Activated T-helper 1 cell treated with anti-CD3 and anti-CD28 coated beads, Interleukin-12 subunit alpha, Interleukin-12 subunit beta, Interleukin-2, Interleukin-4 antibody, amounts not matched to agents 30 ng/mL and 10 ng/mL and 1 ng/mL, durations not matched to agents 14 hours and 24 hours and 36 hours (primary cell): ENCODE measurements at regions of chr1 and their contacts with region 1.

Region 1: GRCh38 chr1:221708987-221709386 is 32.9 kb downstream of the DUSP10 start:
- DNase-seq: peak; percentile 50
- H3K4me3 Mint-ChIP-seq: no peak overlapping the region
- H3K27ac Mint-ChIP-seq: peak overlapping the region; percentile 92
- H3K4me1 Mint-ChIP-seq: peaks cover 78% of the 10 kb centered on the region
- H3K27me3 Mint-ChIP-seq: no peaks in the 10 kb centered on the region

Region 2: GRCh38 chr1:220879076-220879508 is 829.9 kb before region 1 on chr1 and contains the start of gene HLX:
- intact Hi-C with region 1: loop called (anchors 10 kb)
- DNase-seq: peak; percentile 24
- H3K4me3 Mint-ChIP-seq: peak within 1 kb of the TSS; percentile 84
- H3K27ac Mint-ChIP-seq: peak within 1 kb of the TSS; percentile 84
- H3K4me1 Mint-ChIP-seq: peaks cover 36% of the 10 kb centered on the region
- H3K27me3 Mint-ChIP-seq: peaks cover 70% of the 10 kb centered on the region
- total RNA-seq, gene HLX: 5.1 and 6.3 TPM in 2 replicates

Region 3: DNA sequence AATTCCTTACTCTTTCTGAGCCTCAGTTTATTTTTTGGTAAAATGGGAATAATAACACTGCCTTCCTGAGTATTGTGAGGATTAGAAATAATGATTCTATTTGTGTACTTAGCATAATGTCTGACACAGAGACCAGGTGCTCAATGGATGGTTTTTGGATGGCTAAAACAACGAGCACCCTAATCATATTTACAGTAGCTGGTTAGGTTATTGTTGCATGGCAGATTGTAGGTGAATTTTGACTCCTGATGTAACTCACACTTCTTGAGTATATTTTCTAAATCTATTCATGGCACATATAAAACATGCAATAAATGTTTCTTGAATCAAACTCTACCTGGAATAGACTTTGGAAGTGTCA is 44.8 kb after region 1 on chr1:
- intact Hi-C with region 1: loop called (anchors 1 kb)
- DNase-seq: no peak
- H3K4me3 Mint-ChIP-seq: peak overlapping the region; percentile 59
- H3K27ac Mint-ChIP-seq: peak overlapping the region; percentile 82
- H3K4me1 Mint-ChIP-seq: peaks cover 69% of the 10 kb centered on the region
- H3K27me3 Mint-ChIP-seq: no peaks in the 10 kb centered on the region

Region 4: DNA sequence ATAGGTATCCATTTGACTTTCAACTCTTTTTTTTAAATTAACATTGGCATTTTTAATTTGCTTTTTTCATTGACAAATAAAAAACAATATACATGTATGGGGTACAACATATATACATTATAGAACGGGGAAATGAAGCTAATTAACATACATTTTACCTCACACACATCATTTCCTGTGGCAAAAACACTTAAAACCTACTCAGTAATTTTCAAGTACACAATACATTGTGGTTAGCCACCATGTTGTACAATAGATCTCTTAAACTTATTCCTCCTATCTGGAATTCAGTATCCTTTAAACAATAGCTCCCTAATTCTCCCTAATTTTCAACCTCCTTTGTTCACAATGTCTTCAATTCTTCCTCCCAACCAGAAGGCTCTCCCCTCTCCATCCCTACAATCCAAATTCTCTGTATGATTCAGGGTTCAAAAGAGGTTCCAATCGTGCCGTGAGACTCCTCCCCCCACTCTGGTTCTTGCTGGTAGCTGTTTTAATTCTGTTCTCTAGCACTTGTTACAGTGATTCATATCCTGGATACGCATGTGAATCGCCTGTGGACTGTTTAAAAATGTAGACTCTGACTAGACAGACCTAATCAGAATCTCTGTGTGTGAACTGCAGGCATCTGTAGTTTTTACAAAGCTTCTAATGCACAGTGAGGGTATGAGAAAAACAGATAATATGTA is 120.5 kb after region 1 on chr1:
- intact Hi-C with region 1: loop called (anchors 1 kb)
- DNase-seq: peak; percentile 48
- H3K4me3 Mint-ChIP-seq: peak overlapping the region; percentile 73
- H3K27ac Mint-ChIP-seq: peak overlapping the region; percentile 97
- H3K4me1 Mint-ChIP-seq: peaks cover 91% of the 10 kb centered on the region
- H3K27me3 Mint-ChIP-seq: no peaks in the 10 kb centered on the region

Region 5: GRCh38 chr1:221961532-221962292 is 252.7 kb after region 1 on chr1:
- intact Hi-C with region 1: loop called (anchors 5 kb)
- DNase-seq: peak; percentile 38
- H3K4me3 Mint-ChIP-seq: peak overlapping the region; percentile 23
- H3K27ac Mint-ChIP-seq: no peak overlapping the region
- H3K4me1 Mint-ChIP-seq: peaks cover 16% of the 10 kb centered on the region
- H3K27me3 Mint-ChIP-seq: peaks cover 4% of the 10 kb centered on the region

Region 6: GRCh38 chr1:222288040-222288439 is 579.1 kb after region 1 on chr1:
- intact Hi-C with region 1: no loop called
- DNase-seq: no peak
- H3K4me3 Mint-ChIP-seq: no peak overlapping the region
- H3K27ac Mint-ChIP-seq: no peak overlapping the region
- H3K4me1 Mint-ChIP-seq: no peaks in the 10 kb centered on the region
- H3K27me3 Mint-ChIP-seq: no peaks in the 10 kb centered on the region

Region 7: GRCh38 chr1:222589462-222590302 is 880.7 kb after region 1 on chr1 and contains the start of gene TAF1A:
- intact Hi-C with region 1: loop called (anchors 5 kb)
- DNase-seq: peak; percentile 77
- H3K4me3 Mint-ChIP-seq: peak within 1 kb of the TSS; percentile 92
- H3K27ac Mint-ChIP-seq: peak within 1 kb of the TSS; percentile 88
- H3K4me1 Mint-ChIP-seq: peaks cover 37% of the 10 kb centered on the region
- H3K27me3 Mint-ChIP-seq: peaks cover 6% of the 10 kb centered on the region
- total RNA-seq, gene TAF1A: 19.2 and 19.7 TPM in 2 replicates

Region 8: DNA sequence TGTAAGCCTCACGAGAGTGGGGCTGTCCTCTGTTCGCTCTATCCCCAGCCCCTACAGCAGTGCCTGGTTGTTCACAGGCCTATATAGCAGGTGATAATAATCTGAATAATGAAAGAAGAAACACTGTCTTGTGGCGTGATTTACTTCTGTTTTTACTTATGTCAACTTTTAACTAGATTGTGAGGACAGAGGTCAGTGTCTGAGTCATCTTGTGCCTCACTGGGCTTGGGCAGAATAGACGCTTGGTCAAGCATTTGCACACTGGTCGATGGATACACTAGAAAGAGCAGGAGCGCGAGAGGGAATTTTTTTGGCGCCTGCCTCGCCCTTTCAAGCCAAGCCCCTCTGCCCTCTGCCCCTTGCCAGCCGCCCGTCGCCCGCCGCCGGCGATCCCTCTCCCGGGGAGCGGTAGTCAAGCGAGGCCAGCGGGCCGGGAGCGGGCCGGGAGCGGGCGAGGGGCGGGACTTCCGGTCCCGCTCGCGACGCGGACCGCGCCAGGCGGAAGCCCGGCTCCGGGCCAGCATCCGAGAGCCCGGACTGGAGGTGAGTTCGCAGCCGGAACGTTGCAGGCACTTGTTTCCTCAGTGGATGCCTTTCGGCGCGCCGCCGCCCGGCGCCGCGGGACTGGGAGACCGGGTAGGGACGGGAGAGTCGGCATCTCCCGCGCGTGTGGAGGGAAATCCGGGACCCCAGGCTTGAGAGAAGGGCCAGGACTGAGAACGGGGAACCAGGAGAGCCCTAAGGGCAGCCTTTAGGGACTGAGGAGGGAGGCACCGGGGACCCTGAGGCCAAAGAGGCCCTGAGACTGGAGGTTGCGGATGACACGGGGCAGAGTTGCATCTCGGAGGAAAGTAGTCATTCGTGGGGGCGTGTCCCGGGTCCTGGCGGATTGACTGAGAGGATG is 1105.8 kb after region 1 on chr1 and contains the start of gene DISP1:
- intact Hi-C with region 1: loop called (anchors 2 kb)
- DNase-seq: peak; percentile 68
- H3K4me3 Mint-ChIP-seq: peak within 1 kb of the TSS; percentile 90
- H3K27ac Mint-ChIP-seq: peak within 1 kb of the TSS; percentile 93
- H3K4me1 Mint-ChIP-seq: peaks cover 33% of the 10 kb centered on the region
- H3K27me3 Mint-ChIP-seq: peaks cover 12% of the 10 kb centered on the region
- total RNA-seq, gene DISP1: 1.0 and 1.2 TPM in 2 replicates